Cardiac septum (tissue), 1 donor: ENCODE measurements at regions of chr4 and their contacts with region 1.

Region 1: DNA sequence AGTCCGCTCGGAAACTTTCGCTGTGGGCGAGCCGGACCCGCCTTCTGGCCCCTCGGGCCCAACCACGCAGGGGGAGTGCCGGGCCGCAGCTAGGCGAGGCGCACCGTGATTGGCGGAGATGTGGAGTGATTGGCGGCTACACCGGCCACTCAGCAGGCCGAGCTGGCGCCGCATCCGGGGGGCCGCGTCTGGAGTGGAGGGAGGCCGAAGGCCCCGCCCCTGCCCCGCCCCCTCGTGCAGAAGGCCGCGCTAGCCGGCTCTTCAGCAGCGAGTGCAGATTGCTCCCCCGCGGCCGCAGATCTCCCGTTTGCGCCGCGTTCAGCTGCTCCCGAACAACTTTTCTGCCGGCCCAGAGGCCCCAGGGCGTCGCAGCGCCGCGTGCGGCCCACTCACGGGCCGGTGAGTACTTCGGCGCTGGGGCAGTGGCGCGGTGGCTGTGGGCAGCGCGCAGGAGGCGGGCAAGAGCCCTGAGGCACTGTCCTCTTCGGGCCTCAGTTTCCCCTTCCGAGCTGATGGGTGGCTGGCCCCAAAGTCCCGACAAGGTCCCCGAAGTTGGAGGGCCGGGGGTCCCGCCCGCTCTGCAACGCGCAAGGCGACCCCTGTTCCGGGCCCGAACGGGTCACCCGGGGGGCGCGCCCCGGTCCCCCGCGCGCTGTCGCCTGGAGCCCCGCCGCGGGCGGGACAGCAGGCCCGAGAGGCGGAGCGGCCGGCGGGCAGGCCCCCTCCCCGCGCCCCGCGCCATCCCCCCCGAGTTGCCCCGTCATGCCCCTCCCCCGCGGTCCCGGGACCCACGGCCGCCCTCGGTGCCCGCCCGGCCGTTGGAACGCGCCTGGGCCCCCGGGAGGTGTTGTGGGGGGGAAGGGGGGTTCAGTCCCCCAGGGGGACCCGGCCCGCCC is at the start of gene WFS1:
- DNase-seq: peak; percentile 98
- total RNA-seq, gene WFS1: 48.4 TPM

Region 2: GRCh38 chr4:6362896-6363295 is 93.0 kb after region 1 on chr4:
- intact Hi-C with region 1: no loop called
- DNase-seq: no peak

Region 3: GRCh38 chr4:6546681-6547447 is 277.0 kb after region 1 on chr4:
- intact Hi-C with region 1: loop called (anchors 10 kb)
- DNase-seq: no peak